Ascending aorta (tissue), 2 donors: ENCODE measurements at regions of chr12 and their contacts with region 1.

Region 1: GRCh38 chr12:19410211-19410610 is 29.1 kb upstream of the AEBP2 start:
- DNase-seq: no peak
- H3K4me3 ChIP-seq: peak overlapping the region in 1 of 2 donors; percentile 20
- H3K27ac ChIP-seq: peak overlapping the region; percentile 86 to 91
- H3K4me1 ChIP-seq: peaks cover 4 to 30% of the 10 kb centered on the region in 2 donors
- H3K27me3 ChIP-seq: no peaks in the 10 kb centered on the region
- CTCF ChIP-seq: no peak

Region 2: DNA sequence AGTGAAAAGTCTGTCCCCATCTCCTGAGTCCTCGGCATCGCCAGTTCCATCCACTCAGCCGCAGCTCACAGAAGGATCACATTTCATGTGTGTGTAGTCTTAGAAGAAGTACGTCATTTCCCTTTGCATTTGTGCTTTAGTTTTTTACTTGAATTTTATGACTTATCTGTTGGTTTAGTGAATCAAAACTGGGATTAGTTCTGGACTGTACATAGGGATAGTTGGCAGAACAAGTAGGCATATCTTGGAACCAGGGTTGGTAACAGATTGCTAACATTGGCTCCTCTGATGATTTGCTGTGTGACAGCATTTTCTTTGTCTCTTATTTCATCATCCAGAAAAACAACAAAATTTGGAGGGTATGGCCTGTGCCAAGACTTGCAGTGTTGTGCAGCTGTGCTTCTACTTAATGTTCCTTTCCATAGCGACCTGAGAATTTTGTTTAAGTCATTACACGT is 40.5 kb before region 1 on chr12:
- intact Hi-C with region 1: loop called (anchors 2 kb)
- DNase-seq: peak; percentile 14 to 72
- H3K4me3 ChIP-seq: peak overlapping the region in 1 of 2 donors; percentile 5
- H3K27ac ChIP-seq: peak overlapping the region; percentile 45 to 74
- H3K4me1 ChIP-seq: no peaks in the 10 kb centered on the region
- H3K27me3 ChIP-seq: no peaks in the 10 kb centered on the region
- CTCF ChIP-seq: no peak